HepG2 (cell line): ENCODE measurements at regions of chr20 and their contacts with region 1.

Region 1: GRCh38 chr20:45752746-45753145 is 30.6 kb downstream of the SPINT4 start:
- DNase-seq: no peak
- ATAC-seq: no peak
- H3K4me3 ChIP-seq: no peak overlapping the region
- H3K27ac ChIP-seq: no peak overlapping the region
- H3K4me1 ChIP-seq: no peaks in the 10 kb centered on the region
- H3K27me3 ChIP-seq: peaks cover 3 to 4% of the 10 kb centered on the region in 2 experiments; a peak in 1 of 5 replicates
- CTCF ChIP-seq: no peak
- EP300 ChIP-seq: no peak
- POLR2A ChIP-seq: no peak
- RAD21 ChIP-seq: no peak

Region 2: GRCh38 chr20:45765980-45766379 is 13.2 kb after region 1 on chr20:
- CTCF ChIA-PET with region 1: no interaction called
- POLR2A ChIA-PET with region 1: no interaction called
- in situ Hi-C with region 1: no loop called
- intact Hi-C with region 1: loop called (anchors 2 kb)
- DNase-seq: no peak
- ATAC-seq: no peak
- H3K4me3 ChIP-seq: no peak overlapping the region
- H3K27ac ChIP-seq: no peak overlapping the region
- H3K4me1 ChIP-seq: peaks cover 4% of the 10 kb centered on the region
- H3K27me3 ChIP-seq: peaks cover 0 to 17% of the 10 kb centered on the region in 2 experiments; a peak in 3 of 5 replicates
- CTCF ChIP-seq: no peak
- EP300 ChIP-seq: no peak
- POLR2A ChIP-seq: no peak
- RAD21 ChIP-seq: no peak

Region 3: GRCh38 chr20:45867819-45868176 is 115.1 kb after region 1 on chr20:
- CTCF ChIA-PET with region 1: no interaction called
- POLR2A ChIA-PET with region 1: no interaction called
- in situ Hi-C with region 1: no loop called
- intact Hi-C with region 1: no loop called
- DNase-seq: no peak
- ATAC-seq: no peak
- H3K4me3 ChIP-seq: no peak overlapping the region
- H3K27ac ChIP-seq: peak overlapping the region; percentile 24
- H3K4me1 ChIP-seq: peaks cover 67% of the 10 kb centered on the region
- H3K27me3 ChIP-seq: no peaks in the 10 kb centered on the region
- CTCF ChIP-seq: no peak
- EP300 ChIP-seq: no peak
- POLR2A ChIP-seq: no peak
- RAD21 ChIP-seq: no peak